ENCODE measurements at regions of chr13 and their contacts with region 1.

Region 1: GRCh38 chr13:46267166-46267565 is 55.4 kb downstream of the LRRC63 start:
- DNase-seq: no peak

Region 2: GRCh38 chr13:46160471-46161066 is 106.6 kb before region 1 on chr13:
- in situ Hi-C with region 1: loop called (anchors 25 kb)
- DNase-seq: peak; percentile 79